ENCODE measurements at regions of chr5 and their contacts with region 1.

Region 1: DNA sequence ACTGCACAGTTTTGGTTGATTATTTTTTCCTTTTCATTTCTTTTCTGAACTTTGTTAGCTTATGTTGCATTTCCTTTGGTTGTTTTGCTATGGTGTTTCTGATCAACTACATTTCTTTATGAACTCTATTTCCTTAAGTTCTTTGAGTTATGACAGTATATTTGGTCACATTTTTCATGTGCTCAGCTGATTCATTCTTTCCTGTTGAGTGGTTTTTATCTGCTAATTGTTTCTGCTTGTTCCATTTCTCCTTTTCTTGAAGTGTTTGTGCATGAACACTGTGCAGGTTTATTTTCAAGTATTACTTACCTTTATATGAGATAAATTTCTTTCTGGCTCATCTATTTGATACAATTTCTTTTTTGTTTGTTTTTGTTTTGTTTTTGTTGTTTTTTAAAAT is 50.9 kb upstream of the MACIR start:
- DNase-seq: no peak
- H3K4me3 ChIP-seq: no peak overlapping the region
- H3K27ac ChIP-seq: no peak overlapping the region
- H3K4me1 ChIP-seq: no peaks in the 10 kb centered on the region; a peak in 1 of 4 replicates
- H3K27me3 ChIP-seq: no peaks in the 10 kb centered on the region
- CTCF ChIP-seq: no peak
- EP300 ChIP-seq: no peak
- RAD21 ChIP-seq: no peak

Region 2: DNA sequence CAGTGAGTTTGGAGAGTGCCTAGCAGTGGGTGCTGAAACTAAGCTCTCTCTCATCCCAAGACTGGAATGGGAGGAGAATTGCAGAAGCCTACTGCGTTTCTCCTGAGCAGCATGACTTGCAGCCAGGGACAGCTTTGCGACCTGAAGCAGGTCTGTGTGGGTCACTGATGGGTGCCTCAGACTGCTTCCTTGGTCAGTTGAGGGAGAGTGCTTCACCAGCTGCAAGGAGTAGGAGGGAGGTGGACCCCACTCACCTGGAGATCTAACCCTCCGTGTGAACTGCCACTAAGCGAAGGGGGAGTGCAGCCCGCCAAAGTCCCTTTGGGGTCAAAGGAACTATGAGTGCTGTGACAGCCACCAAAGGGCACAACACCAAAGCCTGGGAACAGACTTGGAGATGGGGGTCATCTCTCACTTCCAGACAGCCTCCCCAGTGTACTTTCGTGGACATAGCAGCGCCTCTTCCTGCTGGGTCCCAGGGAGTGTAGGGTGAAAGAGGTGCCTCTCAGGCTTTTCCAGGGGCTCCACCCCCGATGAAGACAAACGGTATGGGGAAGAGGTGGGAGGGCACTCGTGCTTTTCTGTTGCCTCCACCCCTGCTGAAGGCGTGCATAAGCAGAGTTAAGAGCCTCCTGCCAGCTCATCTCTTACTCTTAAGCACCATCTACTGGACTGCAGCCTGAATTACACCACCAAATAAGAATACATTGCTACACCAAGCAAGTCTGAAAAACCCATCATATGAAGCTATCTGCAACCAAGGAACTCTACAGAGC is 16.7 kb after region 1 on chr5:
- CTCF ChIA-PET with region 1: interaction called, 14 read pairs
- POLR2A ChIA-PET with region 1: no interaction called
- DNase-seq: peak; percentile 45
- H3K4me3 ChIP-seq: 0 out of 4 replicates have a peak overlapping the region, but pooled peaks of 1 of the 2 experiments have one; percentile 3
- H3K27ac ChIP-seq: no peak overlapping the region
- H3K4me1 ChIP-seq: no peaks in the 10 kb centered on the region
- H3K27me3 ChIP-seq: no peaks in the 10 kb centered on the region
- CTCF ChIP-seq: peak; percentile 65
- EP300 ChIP-seq: no peak
- RAD21 ChIP-seq: peak; percentile 80

Region 3: GRCh38 chr5:103385722-103386121 is 178.1 kb after region 1 on chr5:
- CTCF ChIA-PET with region 1: no interaction called
- POLR2A ChIA-PET with region 1: no interaction called
- DNase-seq: no peak
- H3K4me3 ChIP-seq: no peak overlapping the region
- H3K27ac ChIP-seq: no peak overlapping the region
- H3K4me1 ChIP-seq: no peaks in the 10 kb centered on the region; a peak in 1 of 4 replicates
- H3K27me3 ChIP-seq: no peaks in the 10 kb centered on the region
- CTCF ChIP-seq: no peak
- EP300 ChIP-seq: no peak
- RAD21 ChIP-seq: no peak

Measured in SK-N-SH (cell line).